ENCODE measurements at regions of chr19 and their contacts with region 1.

Region 1: DNA sequence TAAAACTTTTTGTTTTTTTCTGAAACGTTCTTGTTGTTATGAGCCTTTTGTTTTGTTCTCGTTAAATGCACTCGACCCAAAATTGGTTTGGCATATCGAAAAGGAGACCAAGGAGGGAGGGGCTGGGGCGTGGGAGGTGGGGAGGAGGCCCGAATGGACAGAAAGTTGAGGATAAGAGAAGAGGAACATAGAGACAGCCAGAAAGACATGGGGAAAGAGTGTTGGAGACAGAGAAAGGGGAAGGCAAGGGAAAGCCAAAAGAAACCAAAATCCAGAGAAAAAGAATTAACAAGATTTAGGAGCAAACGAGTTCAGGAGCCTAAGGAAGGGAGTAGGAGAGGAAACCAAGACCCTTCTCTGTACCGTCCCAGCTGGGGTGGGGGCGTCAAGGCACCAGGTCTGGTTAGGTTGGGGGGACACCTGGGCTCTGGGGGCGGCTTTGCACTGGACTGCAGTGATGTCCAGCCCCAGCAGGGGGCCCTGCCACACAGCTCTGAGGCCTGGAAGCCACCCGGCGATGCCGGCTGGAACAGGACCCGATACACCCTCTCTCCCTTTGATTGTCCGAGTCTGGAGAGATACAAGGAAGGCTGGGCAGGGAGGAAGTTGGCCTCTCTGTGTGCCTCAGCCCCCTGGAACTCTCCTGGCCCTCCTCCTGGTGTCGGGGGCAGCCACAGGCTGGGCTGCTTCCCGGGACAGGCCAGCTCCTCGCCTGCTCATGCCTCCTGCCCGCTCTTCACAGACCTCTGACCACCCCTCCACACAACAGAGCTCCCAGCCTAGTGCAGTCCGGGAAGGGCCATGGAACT is 11.6 kb upstream of the ASF1B start:
- DNase-seq: peak; percentile 77
- ATAC-seq: peak; percentile 89
- H3K4me3 ChIP-seq: no peak overlapping the region
- H3K27ac ChIP-seq: no peak overlapping the region
- H3K4me1 ChIP-seq: no peaks in the 10 kb centered on the region
- H3K27me3 ChIP-seq: no peaks in the 10 kb centered on the region
- CTCF ChIP-seq: peak; percentile 92

Region 2: GRCh38 chr19:14347999-14348889 is 200.2 kb after region 1 on chr19:
- CTCF ChIA-PET with region 1: interaction called, 4 read pairs
- POLR2A ChIA-PET with region 1: no interaction called
- intact Hi-C with region 1: loop called (anchors 1 kb)
- DNase-seq: peak; percentile 75
- ATAC-seq: peak; percentile 83
- H3K4me3 ChIP-seq: peak overlapping the region; percentile 70
- H3K27ac ChIP-seq: no peak overlapping the region
- H3K4me1 ChIP-seq: peaks cover 5% of the 10 kb centered on the region
- H3K27me3 ChIP-seq: no peaks in the 10 kb centered on the region
- CTCF ChIP-seq: peak; percentile 98